Pancreas (tissue), 10 donors: ENCODE measurements at regions of chrX and their contacts with region 1.

Region 1: GRCh38 chrX:129726307-129727111 is 12.3 kb upstream of the XPNPEP2 start:
- DNase-seq: peak; percentile 14 to 73 (median 56)
- ATAC-seq: peak; percentile 60 to 94 (median 88)
- H3K4me3 ChIP-seq: no peak overlapping the region
- H3K27ac ChIP-seq: no peak overlapping the region
- H3K4me1 ChIP-seq: no peaks in the 10 kb centered on the region
- H3K27me3 ChIP-seq: peaks cover 0 to 7% (median 3%) of the 10 kb centered on the region in 4 donors
- CTCF ChIP-seq: peak; percentile 24 to 52 (median 38)

Region 2: GRCh38 chrX:129637217-129638109 is 89.0 kb before region 1 on chrX:
- intact Hi-C with region 1: loop called in 2 of 3 experiments (anchors 2 to 10 kb)
- DNase-seq: peak in 5 of 6 donors; percentile 26 to 88 (median 66)
- ATAC-seq: peak in 3 of 4 donors; percentile 85 to 96 (median 88)
- H3K4me3 ChIP-seq: no peak overlapping the region
- H3K27ac ChIP-seq: no peak overlapping the region
- H3K4me1 ChIP-seq: no peaks in the 10 kb centered on the region
- H3K27me3 ChIP-seq: no peaks in the 10 kb centered on the region
- CTCF ChIP-seq: peak; percentile 82 to 92 (median 90)

Region 3: DNA sequence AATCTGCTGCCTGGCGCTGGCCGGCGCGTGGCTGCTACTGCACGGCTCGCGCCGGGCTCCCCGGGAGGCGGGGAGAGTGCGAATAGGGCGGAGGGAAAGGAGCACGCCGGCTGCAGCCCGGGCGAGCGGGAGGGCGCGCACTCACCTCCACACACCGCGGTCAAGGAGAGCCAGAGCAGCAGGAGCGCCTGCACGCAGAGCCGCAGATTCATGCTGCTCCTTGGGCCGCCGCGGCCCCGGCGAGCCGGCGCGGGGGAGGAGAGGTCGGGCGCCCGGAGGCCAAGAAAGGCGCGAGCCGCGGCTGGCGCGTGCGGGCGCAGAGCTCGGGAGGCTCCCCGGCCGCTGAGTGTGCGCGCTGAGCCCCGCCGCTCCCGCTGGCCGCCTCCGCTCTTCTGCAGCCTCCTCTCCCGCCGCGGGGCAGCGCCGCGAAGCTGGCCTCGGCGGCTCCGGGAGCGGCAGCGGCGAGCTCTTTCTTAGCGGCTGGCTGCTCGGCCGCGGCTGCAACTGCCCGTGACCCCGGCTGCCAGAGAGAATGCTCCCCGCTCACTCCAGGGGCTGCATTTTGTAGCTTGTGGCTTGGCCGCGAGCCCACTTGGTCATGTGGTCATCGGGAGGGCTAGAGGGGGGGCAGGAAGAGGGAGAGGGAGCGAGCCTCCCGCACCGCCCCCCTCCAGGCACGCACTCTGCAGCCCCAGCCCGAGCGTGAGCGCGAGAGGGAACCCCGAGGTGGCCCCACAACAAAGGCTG is 71.9 kb before region 1 on chrX and contains the start of gene APLN:
- intact Hi-C with region 1: no loop called
- DNase-seq: peak in 5 of 6 donors; percentile 11 to 74 (median 46)
- ATAC-seq: peak; percentile 67 to 84 (median 77)
- H3K4me3 ChIP-seq: peak within 1 kb of the TSS in 3 of 4 donors; percentile 16 to 48 (median 31)
- H3K27ac ChIP-seq: no peak within 1 kb of the TSS
- H3K4me1 ChIP-seq: no peaks in the 10 kb centered on the region
- H3K27me3 ChIP-seq: peaks cover 0 to 3% (median 0%) of the 10 kb centered on the region in 4 donors
- CTCF ChIP-seq: no peak
- total RNA-seq, gene APLN: 0.09 to 0.61 (median 0.23) TPM in 5 of 6 donors, not detected in the other